ENCODE measurements at regions of chr12 and their contacts with region 1.

Region 1: GRCh38 chr12:25436203-25437030 is 116.7 kb downstream of the LMNTD1 start:
- DNase-seq: peak; percentile 20
- ATAC-seq: peak; percentile 94
- H3K4me3 ChIP-seq: no peak overlapping the region
- H3K27ac ChIP-seq: no peak overlapping the region
- H3K4me1 ChIP-seq: no peaks in the 10 kb centered on the region
- H3K27me3 ChIP-seq: no peaks in the 10 kb centered on the region
- CTCF ChIP-seq: peak; percentile 78 to 86 (median 84)
- EP300 ChIP-seq: no peak
- POLR2A ChIP-seq: no peak
- RAD21 ChIP-seq: peak; percentile 93

Region 2: DNA sequence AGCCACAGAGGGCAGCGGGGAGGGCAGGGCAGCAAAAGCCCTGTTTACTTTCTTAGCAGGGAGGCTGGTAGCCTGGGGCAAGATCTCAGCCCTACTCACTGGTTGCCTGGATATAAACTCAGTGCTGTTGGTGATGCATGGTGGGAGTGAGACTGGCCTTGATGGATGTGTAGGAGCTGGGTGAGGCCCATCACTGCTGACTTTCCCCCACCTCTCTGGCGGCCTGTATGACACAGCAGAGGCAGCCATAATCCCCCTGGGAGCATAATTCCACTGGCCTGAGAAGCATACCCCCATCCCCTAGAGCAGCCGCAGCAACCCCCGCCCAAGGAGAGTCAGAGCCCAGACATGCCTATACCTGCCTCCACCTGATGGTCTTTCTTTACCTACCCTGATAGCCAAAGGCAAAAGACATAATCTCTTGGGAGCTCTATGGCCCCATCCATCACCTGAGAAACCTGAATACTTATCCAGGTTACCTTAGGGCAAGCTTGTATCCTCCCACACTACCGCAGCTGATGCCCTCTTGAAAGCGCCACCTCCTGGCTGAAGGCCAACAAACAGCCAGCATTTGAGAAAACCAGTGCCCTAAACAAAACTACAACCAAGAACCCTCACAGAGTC is 300.8 kb before region 1 on chr12:
- CTCF ChIA-PET with region 1: no interaction called
- POLR2A ChIA-PET with region 1: no interaction called
- RAD21 ChIA-PET with region 1: no interaction called
- SMC1A ChIA-PET with region 1: no interaction called
- in situ Hi-C with region 1: no loop called
- intact Hi-C with region 1: no loop called
- DNase-seq: no peak
- ATAC-seq: peak; percentile 44
- H3K4me3 ChIP-seq: no peak overlapping the region
- H3K27ac ChIP-seq: no peak overlapping the region
- H3K4me1 ChIP-seq: no peaks in the 10 kb centered on the region
- H3K27me3 ChIP-seq: no peaks in the 10 kb centered on the region
- CTCF ChIP-seq: 0 out of 6 replicates have a peak, but pooled peaks of 1 of the 3 experiments have one; percentile 15
- EP300 ChIP-seq: no peak
- POLR2A ChIP-seq: no peak
- RAD21 ChIP-seq: no peak

Region 3: DNA sequence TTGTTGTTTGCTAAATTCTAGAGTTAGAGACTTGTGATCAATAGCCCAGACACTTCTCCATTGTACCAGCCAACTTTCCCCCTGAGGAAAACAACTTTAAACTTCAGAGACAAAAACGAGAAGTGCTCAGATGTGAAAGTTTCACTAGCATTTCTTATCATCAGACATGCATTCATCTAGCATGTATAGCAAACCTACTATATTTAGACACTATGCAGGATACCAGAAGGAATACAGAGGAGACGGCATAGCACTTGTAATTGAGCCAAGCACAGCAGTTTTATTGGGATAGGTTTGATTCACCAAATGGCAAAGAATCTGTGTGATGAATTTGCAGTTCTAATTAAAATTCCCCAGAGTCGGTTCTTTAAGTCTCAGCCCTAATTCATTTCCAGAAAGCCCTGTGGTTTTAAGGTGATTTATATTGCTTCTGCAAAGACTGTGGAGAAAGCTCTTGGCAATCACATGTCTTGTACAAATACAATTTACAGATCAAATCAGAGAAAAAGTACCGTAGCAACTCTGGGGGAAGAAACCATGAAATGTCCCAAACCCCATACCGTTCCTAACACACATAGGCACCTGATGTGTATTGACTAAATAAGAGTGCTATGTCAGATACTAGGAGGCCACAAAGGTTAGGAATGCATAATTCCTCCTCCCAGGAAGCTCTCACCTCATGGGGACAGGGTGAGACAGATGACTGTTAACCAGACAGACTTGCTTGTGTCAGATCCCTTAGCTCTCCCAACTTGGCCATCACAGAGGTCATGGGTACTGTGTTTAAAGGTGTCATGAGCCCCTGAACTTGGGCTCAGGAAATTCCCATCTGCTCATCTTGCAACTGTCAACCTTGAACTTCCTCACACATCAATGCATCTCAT is 116.1 kb before region 1 on chr12:
- CTCF ChIA-PET with region 1: no interaction called
- POLR2A ChIA-PET with region 1: no interaction called
- RAD21 ChIA-PET with region 1: no interaction called
- SMC1A ChIA-PET with region 1: no interaction called
- in situ Hi-C with region 1: no loop called
- intact Hi-C with region 1: no loop called
- DNase-seq: peak; percentile 82
- ATAC-seq: peak; percentile 84
- H3K4me3 ChIP-seq: no peak overlapping the region; the same call in 1 of the 2 replicates
- H3K27ac ChIP-seq: peak overlapping the region; percentile 54
- H3K4me1 ChIP-seq: peaks cover 40% of the 10 kb centered on the region
- H3K27me3 ChIP-seq: no peaks in the 10 kb centered on the region
- CTCF ChIP-seq: no peak
- EP300 ChIP-seq: peak; percentile 28 to 85
- POLR2A ChIP-seq: no peak
- RAD21 ChIP-seq: no peak

Region 4: GRCh38 chr12:25423355-25424050 is 12.9 kb before region 1 on chr12:
- CTCF ChIA-PET with region 1: interaction called, 14 read pairs
- POLR2A ChIA-PET with region 1: no interaction called
- RAD21 ChIA-PET with region 1: no interaction called
- SMC1A ChIA-PET with region 1: no interaction called
- in situ Hi-C with region 1: no loop called
- intact Hi-C with region 1: no loop called
- DNase-seq: no peak
- ATAC-seq: no peak
- H3K4me3 ChIP-seq: no peak overlapping the region
- H3K27ac ChIP-seq: no peak overlapping the region
- H3K4me1 ChIP-seq: no peaks in the 10 kb centered on the region
- H3K27me3 ChIP-seq: no peaks in the 10 kb centered on the region
- CTCF ChIP-seq: no peak
- EP300 ChIP-seq: no peak
- POLR2A ChIP-seq: no peak
- RAD21 ChIP-seq: no peak

Region 5: DNA sequence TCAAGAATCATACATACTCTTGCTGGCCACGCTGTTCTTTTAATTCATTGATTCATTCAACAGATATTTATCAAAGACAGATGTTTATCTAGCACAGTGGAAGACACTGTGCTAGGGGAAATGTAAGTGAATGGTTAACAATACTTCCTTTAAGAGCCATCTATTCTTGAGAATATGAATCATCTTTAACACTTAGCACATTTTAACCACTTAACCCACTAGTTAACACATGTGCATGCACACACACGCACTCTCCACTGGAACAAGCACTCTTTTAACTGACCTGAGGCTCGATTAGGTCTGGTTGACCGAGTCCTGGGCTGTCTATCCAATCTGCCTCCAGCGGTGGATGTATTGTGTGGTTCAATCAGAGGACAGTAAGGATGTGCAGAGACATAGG is 82.1 kb after region 1 on chr12:
- CTCF ChIA-PET with region 1: no interaction called
- POLR2A ChIA-PET with region 1: no interaction called
- RAD21 ChIA-PET with region 1: no interaction called
- SMC1A ChIA-PET with region 1: no interaction called
- in situ Hi-C with region 1: no loop called
- intact Hi-C with region 1: no loop called
- DNase-seq: peak; percentile 7
- ATAC-seq: peak; percentile 91
- H3K4me3 ChIP-seq: no peak overlapping the region
- H3K27ac ChIP-seq: no peak overlapping the region
- H3K4me1 ChIP-seq: no peaks in the 10 kb centered on the region
- H3K27me3 ChIP-seq: no peaks in the 10 kb centered on the region; a peak in 1 of 4 replicates
- CTCF ChIP-seq: no peak
- EP300 ChIP-seq: 0 out of 4 replicates have a peak, but pooled peaks of 1 of the 2 experiments have one; percentile 27
- POLR2A ChIP-seq: no peak
- RAD21 ChIP-seq: no peak

Region 6: DNA sequence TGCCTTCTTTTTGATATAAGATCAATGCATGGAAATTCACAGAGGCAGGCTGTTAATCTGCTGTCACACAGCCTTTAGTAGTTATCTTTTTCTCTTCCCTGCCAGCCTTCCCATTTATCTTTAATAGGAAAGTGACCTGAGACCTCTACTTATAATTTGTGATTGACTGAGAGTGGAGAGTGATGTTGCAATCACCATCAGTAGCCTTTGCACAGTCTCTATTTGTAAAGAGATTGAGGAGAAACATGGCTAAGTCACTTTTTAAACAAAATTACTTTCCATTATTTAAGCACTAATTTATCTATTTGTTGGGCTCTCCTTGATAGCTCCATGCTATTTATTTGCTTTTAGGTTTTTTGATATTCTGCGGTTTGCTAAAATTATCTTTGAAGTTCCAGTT is 96.7 kb after region 1 on chr12:
- CTCF ChIA-PET with region 1: no interaction called
- POLR2A ChIA-PET with region 1: no interaction called
- RAD21 ChIA-PET with region 1: no interaction called
- SMC1A ChIA-PET with region 1: no interaction called
- in situ Hi-C with region 1: no loop called
- intact Hi-C with region 1: no loop called
- DNase-seq: no peak
- ATAC-seq: no peak
- H3K4me3 ChIP-seq: no peak overlapping the region
- H3K27ac ChIP-seq: no peak overlapping the region
- H3K4me1 ChIP-seq: no peaks in the 10 kb centered on the region
- H3K27me3 ChIP-seq: no peaks in the 10 kb centered on the region; a peak in 1 of 4 replicates
- CTCF ChIP-seq: no peak
- EP300 ChIP-seq: no peak
- POLR2A ChIP-seq: no peak
- RAD21 ChIP-seq: no peak

Region 7: GRCh38 chr12:25557830-25558436 is 121.5 kb after region 1 on chr12:
- CTCF ChIA-PET with region 1: interaction called, 4 read pairs
- POLR2A ChIA-PET with region 1: no interaction called
- RAD21 ChIA-PET with region 1: no interaction called
- SMC1A ChIA-PET with region 1: no interaction called
- in situ Hi-C with region 1: no loop called
- intact Hi-C with region 1: loop called (anchors 2 kb)
- DNase-seq: no peak
- ATAC-seq: peak; percentile 31; the same call in 1 of the 3 replicates
- H3K4me3 ChIP-seq: no peak overlapping the region
- H3K27ac ChIP-seq: no peak overlapping the region
- H3K4me1 ChIP-seq: no peaks in the 10 kb centered on the region
- H3K27me3 ChIP-seq: no peaks in the 10 kb centered on the region
- CTCF ChIP-seq: peak; percentile 20 to 33 (median 32); a peak in 4 of 6 replicates
- EP300 ChIP-seq: no peak
- POLR2A ChIP-seq: no peak
- RAD21 ChIP-seq: 0 out of 2 replicates have a peak, but pooled peaks have one; percentile 8

Region 8: GRCh38 chr12:26017484-26018206 is 581.2 kb after region 1 on chr12:
- CTCF ChIA-PET with region 1: interaction called, 16 read pairs
- POLR2A ChIA-PET with region 1: no interaction called
- RAD21 ChIA-PET with region 1: interaction called, 6 read pairs
- SMC1A ChIA-PET with region 1: interaction called, 9 read pairs
- in situ Hi-C with region 1: no loop called
- intact Hi-C with region 1: loop called (anchors 2 kb)
- DNase-seq: no peak
- ATAC-seq: peak; percentile 55
- H3K4me3 ChIP-seq: no peak overlapping the region
- H3K27ac ChIP-seq: no peak overlapping the region
- H3K4me1 ChIP-seq: no peaks in the 10 kb centered on the region
- H3K27me3 ChIP-seq: peaks cover 0 to 3% of the 10 kb centered on the region in 2 experiments; a peak in 2 of 4 replicates
- CTCF ChIP-seq: peak; percentile 48 to 66 (median 55)
- EP300 ChIP-seq: no peak
- POLR2A ChIP-seq: no peak
- RAD21 ChIP-seq: peak; percentile 70

Region 9: GRCh38 chr12:26028953-26029735 is 592.7 kb after region 1 on chr12:
- CTCF ChIA-PET with region 1: interaction called, 16 read pairs
- POLR2A ChIA-PET with region 1: no interaction called
- RAD21 ChIA-PET with region 1: no interaction called
- SMC1A ChIA-PET with region 1: interaction called, 4 read pairs
- in situ Hi-C with region 1: loop called (anchors 5 kb)
- intact Hi-C with region 1: loop called (anchors 1 kb)
- DNase-seq: no peak
- ATAC-seq: peak; percentile 58; the same call in 2 of the 3 replicates
- H3K4me3 ChIP-seq: no peak overlapping the region
- H3K27ac ChIP-seq: no peak overlapping the region
- H3K4me1 ChIP-seq: no peaks in the 10 kb centered on the region
- H3K27me3 ChIP-seq: no peaks in the 10 kb centered on the region
- CTCF ChIP-seq: peak; percentile 66 to 71 (median 67)
- EP300 ChIP-seq: no peak
- POLR2A ChIP-seq: no peak
- RAD21 ChIP-seq: peak; percentile 76

Measured in GM12878 (cell line).